WTC11 (cell line): ENCODE measurements at regions of chr22 and their contacts with region 1.

Region 1: DNA sequence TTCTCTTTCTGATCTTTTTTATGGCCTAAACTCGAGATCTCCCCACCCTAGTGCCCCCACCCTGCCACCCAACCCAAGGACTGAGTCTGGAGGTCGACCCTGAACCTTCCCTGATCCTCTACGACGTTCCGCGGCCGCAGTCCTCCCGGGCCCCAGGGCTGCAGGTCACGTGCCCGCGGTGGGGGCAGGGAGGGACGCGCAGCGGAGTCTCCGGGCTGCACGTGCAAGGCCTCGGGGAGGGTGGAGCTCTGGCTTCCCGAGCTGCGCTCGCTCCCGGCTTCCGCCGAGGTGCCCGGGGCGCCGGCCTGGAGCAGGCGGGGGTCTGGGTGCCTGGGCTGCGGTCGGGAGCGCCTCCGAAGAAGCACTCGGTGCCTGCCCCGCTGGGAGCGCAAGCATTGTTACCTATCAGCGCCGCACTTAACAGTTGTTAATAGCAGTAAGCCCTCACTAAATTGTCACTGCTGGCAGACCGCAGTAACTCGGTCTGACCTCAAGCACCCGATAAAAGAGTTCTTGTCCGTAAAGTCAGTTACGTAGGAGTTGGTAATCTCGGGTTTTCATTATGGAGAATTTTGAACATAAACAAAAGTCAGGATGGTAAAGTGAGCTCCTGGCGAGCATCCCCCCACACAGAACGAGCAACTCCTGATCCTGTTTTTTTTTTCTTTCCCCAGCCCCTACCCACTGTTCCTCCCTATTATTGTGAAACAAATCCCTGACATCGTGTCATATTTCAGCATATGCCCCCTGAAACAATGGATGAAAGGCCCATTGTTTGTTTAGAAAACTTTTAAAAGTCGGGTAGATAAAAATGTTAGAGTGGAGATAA is 69.7 kb upstream of the EP300 start:
- DNase-seq: peak; percentile 93
- ATAC-seq: peak; percentile 81
- H3K4me3 Mint-ChIP-seq: peak overlapping the region; percentile 51
- H3K27ac Mint-ChIP-seq: peak overlapping the region; percentile 63; the same call in 1 of the 2 replicates
- H3K4me1 Mint-ChIP-seq: peaks cover 21% of the 10 kb centered on the region
- H3K27me3 Mint-ChIP-seq: peaks cover 7% of the 10 kb centered on the region
- CTCF ChIP-seq: no peak

Region 2: GRCh38 chr22:40939202-40939601 is 83.5 kb before region 1 on chr22:
- CTCF ChIA-PET with region 1: no interaction called
- POLR2A ChIA-PET with region 1: no interaction called
- DNase-seq: no peak
- ATAC-seq: no peak
- H3K4me3 Mint-ChIP-seq: no peak overlapping the region
- H3K27ac Mint-ChIP-seq: no peak overlapping the region
- H3K4me1 Mint-ChIP-seq: no peaks in the 10 kb centered on the region
- H3K27me3 Mint-ChIP-seq: no peaks in the 10 kb centered on the region
- CTCF ChIP-seq: no peak

Region 3: DNA sequence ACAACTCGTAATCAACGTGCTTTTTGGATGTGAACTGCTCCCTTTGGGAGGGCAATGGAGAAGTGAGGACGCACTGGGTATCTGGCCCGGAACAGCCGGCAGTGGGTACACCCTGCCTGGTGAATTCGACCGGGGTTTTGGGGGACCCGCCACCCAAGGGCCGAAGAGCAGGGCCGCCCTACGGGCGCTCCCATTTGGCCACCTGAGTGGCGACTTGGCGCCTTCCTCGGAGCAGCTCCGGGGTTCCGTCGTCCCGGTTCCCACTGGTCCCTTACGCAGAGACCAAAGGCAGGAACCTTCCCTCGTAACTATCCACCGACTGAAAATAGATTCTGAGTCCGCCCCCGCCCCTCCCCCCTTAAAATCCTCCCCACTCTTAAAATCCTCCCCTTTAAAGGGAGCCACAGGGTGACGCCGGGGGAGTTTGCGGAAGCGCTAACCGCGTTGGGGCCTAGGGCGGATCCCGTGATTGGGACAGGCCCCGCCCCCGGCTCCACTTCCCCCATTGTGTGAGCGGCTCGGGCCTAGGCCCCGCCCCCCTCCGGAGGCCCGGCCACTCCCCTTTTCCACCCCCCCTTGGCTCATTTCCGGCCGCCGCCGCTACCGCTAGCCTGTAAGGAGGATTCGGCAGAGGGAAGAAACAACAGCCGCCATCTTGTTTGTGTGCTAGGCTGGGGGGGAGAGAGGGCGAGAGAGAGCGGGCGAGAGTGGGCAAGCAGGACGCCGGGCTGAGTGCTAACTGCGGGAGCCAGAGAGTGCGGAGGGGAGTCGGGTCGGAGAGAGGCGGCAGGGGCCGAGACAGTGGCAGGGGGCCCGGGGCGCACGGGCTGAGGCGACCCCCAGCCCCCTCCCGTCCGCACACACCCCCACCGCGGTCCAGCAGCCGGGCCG is 68.7 kb after region 1 on chr22:
- CTCF ChIA-PET with region 1: no interaction called
- POLR2A ChIA-PET with region 1: interaction called, 10 read pairs
- DNase-seq: peak; percentile 99
- ATAC-seq: peak; percentile 94
- H3K4me3 Mint-ChIP-seq: peak overlapping the region; percentile 91
- H3K27ac Mint-ChIP-seq: peak overlapping the region; percentile 99
- H3K4me1 Mint-ChIP-seq: peaks cover 32% of the 10 kb centered on the region
- H3K27me3 Mint-ChIP-seq: no peaks in the 10 kb centered on the region
- CTCF ChIP-seq: no peak

Region 4: DNA sequence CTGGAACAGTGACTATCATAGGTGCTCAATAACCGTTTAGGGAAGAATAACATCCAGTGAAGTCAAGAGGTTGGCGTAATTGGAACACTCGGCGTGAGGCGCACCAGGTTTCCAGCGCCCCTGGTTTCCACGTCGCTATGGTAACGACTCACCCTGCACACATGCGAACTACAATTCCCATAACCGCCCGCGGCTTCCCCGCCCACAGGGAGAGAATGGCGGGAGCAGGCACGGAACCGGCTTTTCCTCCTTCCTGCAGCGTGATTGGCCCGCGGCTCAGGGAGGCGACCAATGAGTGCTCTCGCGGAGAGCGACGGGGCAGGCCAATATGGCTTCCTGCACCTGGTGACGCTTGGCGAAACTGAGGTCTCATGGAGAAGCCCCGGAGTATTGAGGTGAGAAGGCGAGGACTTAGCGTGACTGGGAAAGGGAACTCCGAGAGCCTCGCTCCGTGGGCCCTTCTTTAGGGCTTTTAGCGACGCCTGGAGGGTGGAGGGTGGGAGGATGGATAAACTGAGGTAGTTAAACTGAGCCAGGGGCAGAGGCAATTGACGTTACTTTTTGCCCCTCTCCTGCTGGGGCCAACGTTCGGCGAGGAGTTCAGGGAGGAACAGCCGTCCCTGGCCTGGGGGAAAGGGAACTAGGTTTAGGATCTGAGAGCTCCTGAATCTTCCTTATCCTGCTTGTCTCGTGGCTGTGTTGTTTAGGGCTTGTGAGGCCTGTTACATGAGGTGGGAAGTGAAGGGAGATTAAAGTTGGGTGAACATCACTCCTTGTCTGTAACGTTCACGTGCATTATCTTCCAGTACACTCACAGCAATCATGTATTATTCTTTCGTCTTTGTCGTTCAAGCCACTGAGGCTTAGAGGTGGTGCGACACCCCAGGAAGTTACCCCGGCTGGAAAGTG is 182.6 kb after region 1 on chr22 and contains the start of gene L3MBTL2:
- CTCF ChIA-PET with region 1: no interaction called
- POLR2A ChIA-PET with region 1: no interaction called
- DNase-seq: peak; percentile 100
- ATAC-seq: peak; percentile 100
- H3K4me3 Mint-ChIP-seq: peak within 1 kb of the TSS; percentile 96
- H3K27ac Mint-ChIP-seq: peak within 1 kb of the TSS; percentile 100
- H3K4me1 Mint-ChIP-seq: peaks cover 14% of the 10 kb centered on the region
- H3K27me3 Mint-ChIP-seq: peaks cover 22% of the 10 kb centered on the region
- CTCF ChIP-seq: no peak
- total RNA-seq, gene L3MBTL2: 25.2 to 28.0 TPM (median 25.6 TPM) in 3 replicates